ENCODE measurements at regions of chr4 and their contacts with region 1.

Region 1: GRCh38 chr4:124275-125081 is at the start of gene ZNF718:
- DNase-seq: peak; percentile 80
- ATAC-seq: peak; percentile 97
- H3K4me3 Mint-ChIP-seq: peak within 1 kb of the TSS; percentile 100
- H3K27ac Mint-ChIP-seq: peak within 1 kb of the TSS; percentile 99
- H3K4me1 Mint-ChIP-seq: peaks cover 32% of the 10 kb centered on the region
- H3K27me3 Mint-ChIP-seq: no peaks in the 10 kb centered on the region
- CTCF ChIP-seq: no peak
- total RNA-seq, gene ZNF718: 9.3 and 10.9 TPM in 2 replicates

Region 2: DNA sequence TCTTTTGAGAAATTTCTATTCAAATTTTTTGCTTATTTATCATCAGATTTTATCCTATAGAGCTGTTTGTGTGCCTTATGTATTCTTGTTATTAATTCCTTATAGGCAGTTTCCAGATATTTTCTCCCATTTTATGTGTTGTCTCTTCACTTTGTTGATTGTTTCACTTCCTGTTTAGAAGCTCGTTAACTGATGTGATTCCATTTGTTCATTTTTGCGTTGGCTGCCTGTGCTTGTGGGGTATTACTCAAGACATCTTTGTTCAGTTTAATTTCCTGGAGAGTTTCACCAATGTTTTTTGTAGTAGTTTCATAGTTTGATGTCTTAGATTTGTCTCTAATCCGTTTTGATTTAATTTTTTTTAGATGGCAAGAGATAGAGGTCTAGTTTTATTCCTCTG is 14.5 kb after region 1 on chr4:
- CTCF ChIA-PET with region 1: no interaction called
- POLR2A ChIA-PET with region 1: interaction called, 10 read pairs
- intact Hi-C with region 1: no loop called
- DNase-seq: no peak
- ATAC-seq: no peak
- H3K4me3 Mint-ChIP-seq: no peak overlapping the region
- H3K27ac Mint-ChIP-seq: no peak overlapping the region
- H3K4me1 Mint-ChIP-seq: peaks cover 9% of the 10 kb centered on the region
- H3K27me3 Mint-ChIP-seq: no peaks in the 10 kb centered on the region
- CTCF ChIP-seq: no peak

Measured in activated B cell treated with CpG ODN at 0.5 μM for 24 hours (primary cell).